ENCODE measurements at regions of chr1 and their contacts with region 1.

Region 1: DNA sequence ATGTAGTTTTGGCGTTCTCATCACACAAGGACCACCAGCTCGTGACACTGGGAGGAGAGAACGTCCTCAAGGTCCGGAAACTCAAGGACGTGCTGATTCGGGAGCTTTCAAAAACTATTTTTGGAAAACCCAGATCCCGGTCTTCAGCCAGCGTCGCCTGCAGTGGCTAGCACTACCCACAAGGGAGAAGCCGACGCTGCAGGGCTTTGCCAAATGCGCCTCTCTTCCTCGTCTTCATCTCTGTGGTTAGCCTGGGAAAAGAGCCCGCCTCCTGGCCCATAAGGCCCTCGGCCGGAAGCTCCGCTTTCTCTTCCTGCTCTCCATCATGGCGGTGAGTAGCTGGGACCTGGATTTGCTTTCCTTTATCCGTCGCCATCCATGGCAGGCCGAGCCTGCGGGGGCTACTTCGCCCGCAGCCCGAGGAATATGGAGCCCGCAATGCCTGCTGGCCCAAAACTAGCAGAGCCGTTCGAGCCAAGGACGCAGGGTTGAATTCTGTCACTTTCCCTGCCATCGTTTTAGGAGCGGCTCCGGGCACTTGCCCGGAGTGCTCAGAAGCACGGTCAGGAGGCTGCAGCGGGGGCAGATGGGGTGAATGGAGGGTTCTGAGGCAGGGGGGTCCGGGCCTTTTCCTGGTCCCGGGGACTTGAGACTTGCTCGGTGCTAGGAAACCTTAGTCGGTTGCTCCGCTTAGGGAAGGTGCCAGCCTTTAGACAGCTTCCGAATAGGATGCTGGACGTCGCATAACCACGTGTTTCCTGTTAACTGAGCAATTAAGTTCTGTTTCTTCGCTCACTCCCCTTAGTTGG is at the start of gene RPL11:
- DNase-seq: peak; percentile 82
- H3K4me3 Mint-ChIP-seq: peak within 1 kb of the TSS; percentile 97
- H3K27ac Mint-ChIP-seq: peak within 1 kb of the TSS; percentile 90
- H3K4me1 Mint-ChIP-seq: peaks cover 45% of the 10 kb centered on the region
- H3K27me3 Mint-ChIP-seq: no peaks in the 10 kb centered on the region
- total RNA-seq, gene RPL11: 1,058 and 1,119 TPM in 2 replicates

Region 2: GRCh38 chr1:23484253-23485001 is 207.3 kb before region 1 on chr1:
- intact Hi-C with region 1: loop called (anchors 1 kb)
- DNase-seq: peak; percentile 81
- H3K4me3 Mint-ChIP-seq: peak overlapping the region; percentile 87
- H3K27ac Mint-ChIP-seq: peak overlapping the region; percentile 44
- H3K4me1 Mint-ChIP-seq: peaks cover 16% of the 10 kb centered on the region
- H3K27me3 Mint-ChIP-seq: peaks cover 61% of the 10 kb centered on the region

Region 3: GRCh38 chr1:23743287-23744052 is 51.8 kb after region 1 on chr1 and contains the start of gene ELOA:
- intact Hi-C with region 1: loop called (anchors 1 kb)
- DNase-seq: peak; percentile 77
- H3K4me3 Mint-ChIP-seq: peak within 1 kb of the TSS; percentile 95
- H3K27ac Mint-ChIP-seq: peak within 1 kb of the TSS; percentile 88
- H3K4me1 Mint-ChIP-seq: peaks cover 47% of the 10 kb centered on the region
- H3K27me3 Mint-ChIP-seq: peaks cover 2% of the 10 kb centered on the region
- total RNA-seq, gene ELOA: 54.5 and 55.2 TPM in 2 replicates

Region 4: DNA sequence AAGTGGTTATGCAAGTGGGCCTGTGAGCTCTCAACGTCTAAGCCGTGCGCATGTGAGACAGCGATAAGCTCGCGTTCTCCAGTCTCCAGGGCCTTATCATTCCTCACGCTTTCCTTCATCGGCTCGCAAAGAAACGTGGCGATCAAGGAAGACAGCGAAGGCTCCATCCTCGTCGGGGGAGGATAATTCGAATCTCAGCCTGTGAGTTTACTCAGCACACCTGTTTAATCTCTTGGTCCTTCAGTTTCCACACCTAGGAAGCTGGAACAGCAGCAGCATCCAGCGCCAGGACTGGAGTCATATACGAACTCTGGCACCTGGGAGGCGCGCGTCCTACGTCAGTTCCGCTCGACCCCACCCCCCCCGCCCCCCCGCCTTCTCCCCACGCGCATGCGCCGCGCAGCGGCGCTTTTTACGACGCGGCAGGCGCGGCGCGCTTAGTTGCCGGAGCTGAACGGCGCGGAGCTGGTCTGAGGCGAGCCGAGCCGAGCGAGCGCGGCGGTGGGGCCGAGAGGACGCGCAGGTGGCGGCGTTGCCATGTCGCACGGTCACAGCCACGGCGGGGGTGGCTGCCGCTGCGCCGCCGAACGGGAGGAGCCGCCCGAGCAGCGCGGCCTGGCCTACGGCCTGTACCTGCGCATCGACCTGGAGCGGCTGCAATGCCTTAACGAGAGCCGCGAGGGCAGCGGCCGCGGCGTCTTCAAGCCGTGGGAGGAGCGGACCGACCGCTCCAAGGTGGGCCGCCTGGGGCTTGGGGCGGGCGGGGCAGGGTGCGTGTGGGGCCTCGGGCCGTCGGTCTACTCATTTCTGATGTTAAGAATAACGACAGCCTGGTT is 86.5 kb after region 1 on chr1 and contains the start of gene PITHD1:
- intact Hi-C with region 1: loop called (anchors 1 kb)
- DNase-seq: peak; percentile 80
- H3K4me3 Mint-ChIP-seq: peak within 1 kb of the TSS; percentile 95
- H3K27ac Mint-ChIP-seq: peak within 1 kb of the TSS; percentile 94
- H3K4me1 Mint-ChIP-seq: peaks cover 43% of the 10 kb centered on the region
- H3K27me3 Mint-ChIP-seq: no peaks in the 10 kb centered on the region
- total RNA-seq, gene PITHD1: 83.2 and 83.4 TPM in 2 replicates

Region 5: DNA sequence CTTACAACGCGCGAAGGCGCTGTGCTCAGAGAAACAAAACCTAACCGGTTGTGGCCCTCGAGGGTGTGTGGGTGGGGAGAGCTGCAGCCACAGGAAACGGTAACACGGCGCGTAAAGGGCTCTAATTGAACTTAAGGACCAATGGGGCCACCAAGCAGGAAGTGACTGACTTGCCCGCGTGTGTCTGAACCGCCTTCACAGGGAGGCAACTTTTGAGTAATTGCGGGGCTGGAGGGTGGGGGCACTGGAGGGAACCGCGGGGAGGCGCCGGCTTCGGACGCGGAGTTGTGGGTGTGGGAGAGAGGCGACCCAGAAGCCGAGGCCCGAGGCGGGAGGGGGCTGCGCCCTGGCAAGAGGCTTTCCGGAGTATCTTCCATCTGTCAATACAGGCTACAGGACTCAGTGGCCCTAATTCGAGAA is 267.3 kb after region 1 on chr1:
- intact Hi-C with region 1: loop called (anchors 1 kb)
- DNase-seq: peak; percentile 90
- H3K4me3 Mint-ChIP-seq: peak overlapping the region; percentile 99
- H3K27ac Mint-ChIP-seq: peak overlapping the region; percentile 100
- H3K4me1 Mint-ChIP-seq: peaks cover 67% of the 10 kb centered on the region
- H3K27me3 Mint-ChIP-seq: no peaks in the 10 kb centered on the region